GM12878 (cell line): ENCODE measurements at regions of chr11 and their contacts with region 1.

Region 1: DNA sequence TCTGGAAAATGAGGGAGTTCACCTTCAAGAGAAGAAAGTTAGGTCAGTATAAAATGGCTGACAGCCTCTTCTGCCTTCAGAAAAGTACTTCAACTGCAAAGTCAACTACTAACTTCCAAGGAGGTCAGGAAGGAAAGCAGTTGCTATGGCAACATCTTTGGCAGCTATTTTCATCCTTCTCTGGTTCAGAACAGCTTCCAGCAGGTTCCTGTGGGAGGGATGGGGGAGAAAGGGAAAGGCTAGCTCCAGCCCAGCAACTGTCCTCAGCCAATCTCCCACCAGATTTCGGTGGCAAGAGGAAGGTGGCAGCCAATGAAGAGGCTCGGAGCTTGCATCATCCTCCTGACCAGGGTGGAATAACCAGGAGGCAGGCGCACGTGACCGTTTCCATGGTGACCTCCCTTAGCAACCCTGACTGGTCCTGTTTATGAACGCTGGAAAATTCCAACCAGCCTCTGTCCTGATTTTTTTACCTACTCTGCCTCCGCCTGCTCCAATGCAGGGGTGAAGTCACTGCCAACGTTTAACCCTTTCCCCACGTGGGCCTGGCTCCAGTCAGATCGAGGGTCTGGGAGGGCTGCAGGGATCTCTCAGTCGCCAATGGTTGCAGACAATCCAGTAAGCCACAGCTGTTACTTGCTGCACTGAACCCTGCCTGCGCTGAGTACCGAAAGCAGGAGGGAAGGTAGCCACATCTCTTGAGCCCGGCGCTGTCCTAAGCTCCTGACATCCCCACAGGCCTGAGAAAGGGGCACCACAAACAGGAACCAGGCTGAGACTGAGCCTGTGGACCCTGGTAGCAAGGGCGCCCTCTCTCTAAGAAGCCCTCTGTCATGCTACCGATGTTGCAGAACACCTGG is 11.2 kb upstream of the MALAT1 start:
- DNase-seq: no peak
- ATAC-seq: peak; percentile 79
- H3K4me3 ChIP-seq: peak overlapping the region; percentile 15; the same call in 1 of the 2 replicates
- H3K27ac ChIP-seq: peak overlapping the region; percentile 62
- H3K4me1 ChIP-seq: peaks cover 61% of the 10 kb centered on the region
- H3K27me3 ChIP-seq: no peaks in the 10 kb centered on the region
- CTCF ChIP-seq: peak in 1 of 3 experiments; percentile 12; a peak in 2 of 6 replicates
- EP300 ChIP-seq: peak in 1 of 2 experiments; percentile 61; a peak in 1 of 4 replicates
- POLR2A ChIP-seq: peak; percentile 48; the same call in 1 of the 2 replicates
- RAD21 ChIP-seq: no peak

Region 2: DNA sequence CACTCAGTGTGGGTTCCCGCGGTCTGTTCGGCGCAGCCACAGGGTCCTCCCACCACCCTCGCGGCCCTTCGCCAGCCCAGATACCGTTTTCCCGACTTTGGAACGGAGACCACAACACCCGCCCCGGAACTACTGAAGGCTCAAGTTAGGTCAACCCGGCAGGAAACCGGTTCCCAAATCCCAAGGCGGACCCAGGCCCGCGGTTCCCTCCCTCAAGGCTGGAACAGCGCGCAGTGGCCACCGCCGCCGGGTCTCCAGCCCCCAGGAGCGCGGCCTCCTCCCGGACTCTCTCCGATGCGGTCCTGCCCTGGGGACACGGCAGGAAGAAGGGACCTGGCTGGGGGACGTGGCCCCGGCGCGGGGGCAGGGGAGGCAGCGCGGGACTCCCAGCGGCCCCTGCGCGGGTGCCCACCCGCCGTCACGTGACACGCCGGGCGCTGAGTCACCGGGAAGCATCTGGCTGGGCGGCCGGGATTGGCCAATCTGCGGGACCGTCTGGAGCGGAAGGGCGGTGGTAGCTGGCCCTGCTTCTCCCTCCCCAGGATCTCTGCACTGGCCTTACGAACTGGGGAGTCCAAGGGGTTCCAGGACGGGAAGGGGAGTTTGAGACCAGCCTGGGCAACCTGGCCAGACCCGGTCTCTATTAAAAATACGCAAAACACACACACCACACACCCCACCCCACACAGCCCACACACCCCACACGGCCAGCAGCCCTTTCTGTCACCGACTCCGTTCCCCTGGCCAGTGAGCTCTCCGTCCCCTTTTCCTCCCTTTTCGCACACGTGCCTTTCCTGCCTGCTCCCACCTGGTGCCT is 10.3 kb before region 1 on chr11:
- CTCF ChIA-PET with region 1: interaction called, 728 read pairs
- POLR2A ChIA-PET with region 1: interaction called, 429 read pairs
- RAD21 ChIA-PET with region 1: interaction called, 208 read pairs
- SMC1A ChIA-PET with region 1: interaction called, 123 read pairs
- in situ Hi-C with region 1: no loop called
- intact Hi-C with region 1: no loop called
- DNase-seq: no peak
- ATAC-seq: peak; percentile 88
- H3K4me3 ChIP-seq: peak overlapping the region; percentile 79
- H3K27ac ChIP-seq: peak overlapping the region; percentile 100
- H3K4me1 ChIP-seq: peaks cover 26% of the 10 kb centered on the region
- H3K27me3 ChIP-seq: no peaks in the 10 kb centered on the region
- CTCF ChIP-seq: no peak
- EP300 ChIP-seq: 0 out of 4 replicates have a peak, but pooled peaks of 1 of the 2 experiments have one; percentile 26
- POLR2A ChIP-seq: peak; percentile 91
- RAD21 ChIP-seq: no peak

Region 3: DNA sequence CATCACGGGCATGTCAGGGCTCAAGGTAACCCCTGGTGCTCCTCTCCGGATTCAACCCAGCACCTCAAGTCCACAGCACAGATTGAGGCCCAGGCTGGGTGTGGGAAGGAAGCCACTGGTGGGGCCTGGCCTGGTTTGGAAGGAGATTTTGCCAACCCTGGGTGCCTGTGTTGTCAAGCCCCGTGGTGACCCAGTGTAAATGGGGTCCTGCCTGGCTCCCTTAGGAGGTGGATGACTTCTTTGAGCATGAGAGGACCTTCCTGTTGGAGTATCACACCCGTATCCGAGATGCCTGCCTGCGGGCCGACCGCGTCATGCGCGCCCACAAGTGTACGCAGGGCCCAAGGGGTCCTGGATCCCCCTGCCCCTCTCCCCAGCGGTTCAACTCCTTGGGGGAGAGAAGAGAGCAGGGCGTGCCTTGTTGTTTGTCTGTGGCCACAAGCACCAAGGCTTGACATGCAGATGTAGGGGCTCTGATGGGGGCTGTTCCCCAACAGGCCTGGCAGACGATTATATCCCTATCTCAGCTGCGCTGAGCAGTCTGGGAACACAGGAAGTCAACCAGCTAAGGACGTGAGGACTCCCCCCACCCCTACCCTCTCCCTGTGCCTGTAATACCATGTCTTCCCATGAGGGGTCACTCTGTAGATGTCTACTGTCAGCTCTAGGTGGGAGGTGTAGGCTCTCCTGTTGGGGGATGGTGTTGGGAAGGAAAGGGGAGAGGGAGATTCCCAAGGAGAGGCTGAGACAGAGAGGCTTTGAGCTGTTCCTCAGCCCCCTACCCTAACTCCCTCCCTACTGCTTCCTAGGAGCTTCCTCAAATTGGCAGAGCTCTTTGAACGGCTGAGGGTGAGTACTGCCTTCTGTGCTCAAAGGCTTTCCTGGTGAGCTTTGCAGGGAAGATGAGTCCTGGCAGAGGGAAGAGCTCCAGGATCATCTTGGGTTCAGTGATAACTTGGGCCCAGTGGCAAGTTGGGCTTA is 363.5 kb after region 1 on chr11:
- CTCF ChIA-PET with region 1: no interaction called
- POLR2A ChIA-PET with region 1: no interaction called
- RAD21 ChIA-PET with region 1: no interaction called
- SMC1A ChIA-PET with region 1: no interaction called
- in situ Hi-C with region 1: no loop called
- intact Hi-C with region 1: no loop called
- DNase-seq: no peak
- ATAC-seq: peak; percentile 40
- H3K4me3 ChIP-seq: no peak overlapping the region
- H3K27ac ChIP-seq: no peak overlapping the region
- H3K4me1 ChIP-seq: peaks cover 8% of the 10 kb centered on the region
- H3K27me3 ChIP-seq: no peaks in the 10 kb centered on the region
- CTCF ChIP-seq: peak in 2 of 3 experiments; percentile 46 to 64; a peak in 4 of 6 replicates
- EP300 ChIP-seq: no peak
- POLR2A ChIP-seq: peak; percentile 24
- RAD21 ChIP-seq: no peak